Gastrocnemius medialis (tissue), 4 donors: ENCODE measurements at regions of chr19 and their contacts with region 1.

Region 1: GRCh38 chr19:23872282-23872919 is 42.3 kb upstream of the ZNF726 start:
- DNase-seq: no peak
- ATAC-seq: no peak
- H3K4me3 ChIP-seq: no peak overlapping the region
- H3K27ac ChIP-seq: no peak overlapping the region
- H3K4me1 ChIP-seq: no peaks in the 10 kb centered on the region
- H3K27me3 ChIP-seq: no peaks in the 10 kb centered on the region
- CTCF ChIP-seq: no peak
- POLR2A ChIP-seq: no peak

Region 2: DNA sequence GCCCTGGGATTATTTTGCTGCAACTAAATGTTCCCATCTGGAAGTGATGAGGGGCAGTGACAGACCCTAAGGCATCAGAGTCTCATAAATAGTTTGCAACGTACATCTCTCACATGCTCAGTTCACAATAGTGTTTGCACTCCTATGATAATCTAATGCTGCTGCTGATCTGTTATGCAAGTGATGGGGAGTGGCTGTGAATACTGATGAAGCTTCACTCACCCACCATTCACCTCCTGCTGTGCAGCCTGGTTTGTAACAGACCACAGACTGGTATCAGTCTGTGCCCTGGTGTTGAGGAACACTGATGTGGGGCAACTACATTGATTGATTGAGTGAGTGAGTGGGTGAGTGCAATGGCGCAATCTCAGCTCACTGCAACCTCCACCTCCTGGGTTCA is 97.2 kb after region 1 on chr19:
- in situ Hi-C with region 1: no loop called
- intact Hi-C with region 1: loop called (anchors 5 kb)
- DNase-seq: no peak
- ATAC-seq: no peak
- H3K4me3 ChIP-seq: no peak overlapping the region
- H3K27ac ChIP-seq: no peak overlapping the region
- H3K4me1 ChIP-seq: no peaks in the 10 kb centered on the region
- H3K27me3 ChIP-seq: peaks cover 3 to 21% (median 10%) of the 10 kb centered on the region in 3 donors
- CTCF ChIP-seq: no peak
- POLR2A ChIP-seq: no peak